ENCODE measurements at regions of chr17 and their contacts with region 1.

Region 1: DNA sequence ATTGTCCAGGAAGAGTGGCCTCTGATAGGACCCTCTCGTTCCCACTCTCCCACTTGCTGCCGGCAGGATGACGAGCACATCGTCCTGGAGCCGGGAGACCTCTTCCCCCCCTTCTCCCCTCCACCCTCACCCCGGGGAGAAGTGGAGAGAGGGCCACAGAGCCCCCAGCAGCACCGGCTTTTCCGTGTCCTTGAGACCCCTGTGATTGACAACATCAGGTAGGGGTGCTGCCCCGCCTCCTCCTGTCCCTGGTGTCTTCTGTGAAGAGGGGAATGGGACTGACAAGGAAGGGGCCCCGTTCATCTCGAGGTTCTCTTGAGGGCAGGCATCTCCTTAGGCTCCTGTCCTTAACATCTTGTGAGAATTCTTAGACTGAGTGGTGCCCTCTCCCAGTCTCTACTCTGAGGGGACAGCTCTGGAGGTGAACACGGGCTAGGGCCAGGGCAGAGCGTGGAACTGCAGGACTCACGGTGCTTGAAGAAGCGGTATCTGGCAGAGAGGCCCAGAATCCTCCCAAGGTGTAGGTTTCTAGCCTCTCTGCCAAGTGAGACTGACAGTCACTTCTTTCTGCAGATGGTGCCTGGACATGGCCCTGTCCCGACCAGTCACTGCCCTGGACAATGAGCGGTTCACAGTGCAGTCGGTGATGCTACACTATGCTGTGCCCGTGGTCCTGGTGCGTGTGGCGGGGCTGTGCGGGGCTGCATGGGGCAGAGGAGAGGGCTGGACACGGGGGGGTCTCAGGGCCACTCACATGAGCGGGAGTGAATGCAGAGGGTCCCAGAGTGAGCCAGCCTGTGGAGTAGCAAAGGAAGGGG is 26.4 kb downstream of the CASKIN2 start:
- DNase-seq: no peak

Region 2: GRCh38 chr17:75524953-75525719 is 36.2 kb after region 1 on chr17 and contains the start of gene LLGL2:
- intact Hi-C with region 1: loop called in 1 of 2 experiments (anchors 1 kb)
- DNase-seq: peak; percentile 89
- total RNA-seq, gene LLGL2: 6.4 to 6.8 TPM

Region 3: DNA sequence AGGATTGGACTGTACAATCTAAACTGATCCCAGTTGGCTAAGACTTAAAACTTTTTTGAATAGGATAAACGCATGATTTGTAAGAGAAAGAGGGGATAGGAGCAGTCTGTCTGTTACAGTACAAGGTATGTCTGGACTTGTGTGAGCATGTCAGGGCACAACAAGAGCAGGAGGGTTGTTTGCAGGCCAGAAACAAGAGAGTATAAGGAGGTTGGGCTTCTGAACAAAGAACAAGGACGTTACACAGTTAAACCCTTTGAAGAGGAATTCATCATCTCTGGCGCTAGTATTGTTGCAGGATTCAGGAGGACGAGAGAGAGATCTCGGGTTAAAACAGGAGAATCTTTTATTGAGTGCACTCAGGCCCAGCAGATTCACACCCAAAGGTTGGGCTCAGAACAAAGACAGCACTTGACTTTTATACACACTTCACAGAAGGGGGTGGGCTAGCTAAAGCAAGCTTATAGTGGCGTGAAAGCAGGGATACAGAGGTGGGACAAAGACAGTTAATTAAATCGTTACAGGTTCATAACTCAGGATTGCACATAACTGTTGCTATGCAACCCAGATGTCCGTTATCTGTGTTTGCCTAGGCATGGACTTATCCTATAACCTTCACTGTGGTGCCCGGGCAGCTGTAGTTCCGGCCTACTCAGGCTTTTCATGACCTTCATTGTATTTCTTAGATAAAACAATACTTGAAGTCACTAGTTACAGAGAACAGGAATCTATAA is 1686.2 kb after region 1 on chr17:
- intact Hi-C with region 1: no loop called
- DNase-seq: no peak

Measured in posterior vena cava (tissue), 2 donors.